GM12878 (cell line): ENCODE measurements at regions of chr9 and their contacts with region 1.

Region 1: GRCh38 chr9:76810377-76810957 is 46.2 kb downstream of the PCA3 start:
- DNase-seq: no peak
- ATAC-seq: peak; percentile 85
- H3K4me3 ChIP-seq: no peak overlapping the region
- H3K27ac ChIP-seq: no peak overlapping the region
- H3K4me1 ChIP-seq: no peaks in the 10 kb centered on the region
- H3K27me3 ChIP-seq: no peaks in the 10 kb centered on the region; a peak in 1 of 4 replicates
- CTCF ChIP-seq: peak; percentile 78 to 92 (median 88)
- EP300 ChIP-seq: no peak
- POLR2A ChIP-seq: no peak
- RAD21 ChIP-seq: peak; percentile 95

Region 2: DNA sequence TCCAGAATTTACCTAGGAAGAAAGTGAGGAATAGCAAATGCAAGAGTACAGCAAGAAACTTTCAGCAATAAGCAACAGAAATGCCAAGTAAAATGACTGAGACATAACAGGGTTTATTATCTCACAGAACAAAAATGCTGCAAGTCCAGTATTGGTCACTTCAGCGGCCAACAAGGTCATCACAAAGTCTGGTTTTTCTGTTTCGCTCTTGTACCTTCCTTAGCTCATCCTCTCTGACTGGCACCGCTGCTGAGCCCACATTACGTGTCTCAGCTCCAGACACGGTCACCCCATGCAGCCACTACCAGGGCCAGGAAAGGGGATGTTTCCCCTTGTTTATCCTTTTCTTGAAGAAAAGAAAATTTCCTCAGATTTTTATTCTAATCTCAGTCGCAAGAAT is 498.9 kb before region 1 on chr9:
- CTCF ChIA-PET with region 1: no interaction called
- POLR2A ChIA-PET with region 1: no interaction called
- RAD21 ChIA-PET with region 1: no interaction called
- SMC1A ChIA-PET with region 1: no interaction called
- in situ Hi-C with region 1: no loop called
- intact Hi-C with region 1: no loop called
- DNase-seq: no peak
- ATAC-seq: no peak
- H3K4me3 ChIP-seq: no peak overlapping the region
- H3K27ac ChIP-seq: no peak overlapping the region
- H3K4me1 ChIP-seq: no peaks in the 10 kb centered on the region
- H3K27me3 ChIP-seq: peaks cover 0 to 2% of the 10 kb centered on the region in 2 experiments; a peak in 2 of 4 replicates
- CTCF ChIP-seq: no peak
- EP300 ChIP-seq: no peak
- POLR2A ChIP-seq: no peak
- RAD21 ChIP-seq: no peak

Region 3: DNA sequence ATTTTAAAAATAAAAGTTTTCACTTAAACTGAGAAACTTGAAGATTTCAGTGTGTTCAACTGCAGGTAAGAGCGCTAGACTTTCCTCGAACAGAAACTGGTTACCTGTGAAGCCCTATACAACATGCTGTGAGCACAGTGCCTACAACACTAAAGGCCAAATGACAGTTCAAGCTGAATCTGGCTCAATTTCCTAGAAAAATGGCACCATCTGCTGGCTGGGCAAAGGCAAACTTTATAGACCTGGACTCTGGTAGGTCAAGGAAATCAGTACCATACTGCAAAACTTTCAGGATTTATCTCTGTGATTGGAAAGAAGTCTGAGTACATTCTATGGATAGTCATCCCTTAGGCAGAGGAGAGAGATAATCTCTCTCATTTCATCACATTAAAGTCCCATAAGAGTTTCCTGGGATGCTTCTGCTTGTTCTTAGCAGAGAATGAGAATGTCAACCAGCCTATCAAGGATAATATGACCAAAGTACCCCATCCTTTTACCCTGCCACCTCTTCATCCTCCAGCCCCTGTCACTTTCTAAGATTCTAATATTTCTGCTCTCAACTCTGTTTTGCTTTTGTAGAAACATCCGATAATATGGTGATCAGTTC is 177.2 kb after region 1 on chr9:
- CTCF ChIA-PET with region 1: interaction called, 11 read pairs
- POLR2A ChIA-PET with region 1: no interaction called
- RAD21 ChIA-PET with region 1: interaction called, 9 read pairs
- SMC1A ChIA-PET with region 1: interaction called, 10 read pairs
- in situ Hi-C with region 1: loop called (anchors 10 kb)
- intact Hi-C with region 1: loop called (anchors 1 kb)
- DNase-seq: peak; percentile 5
- ATAC-seq: peak; percentile 87
- H3K4me3 ChIP-seq: no peak overlapping the region
- H3K27ac ChIP-seq: no peak overlapping the region
- H3K4me1 ChIP-seq: no peaks in the 10 kb centered on the region
- H3K27me3 ChIP-seq: no peaks in the 10 kb centered on the region; a peak in 1 of 4 replicates
- CTCF ChIP-seq: peak; percentile 43 to 67 (median 50); a peak in 5 of 6 replicates
- EP300 ChIP-seq: no peak
- POLR2A ChIP-seq: no peak
- RAD21 ChIP-seq: peak; percentile 81

Region 4: GRCh38 chr9:76996700-76997099 is 186.2 kb after region 1 on chr9:
- CTCF ChIA-PET with region 1: interaction called, 56 read pairs
- POLR2A ChIA-PET with region 1: no interaction called
- RAD21 ChIA-PET with region 1: interaction called, 17 read pairs
- SMC1A ChIA-PET with region 1: no interaction called
- in situ Hi-C with region 1: no loop called
- intact Hi-C with region 1: no loop called
- DNase-seq: no peak
- ATAC-seq: peak; percentile 82
- H3K4me3 ChIP-seq: no peak overlapping the region
- H3K27ac ChIP-seq: no peak overlapping the region
- H3K4me1 ChIP-seq: no peaks in the 10 kb centered on the region
- H3K27me3 ChIP-seq: no peaks in the 10 kb centered on the region; a peak in 1 of 4 replicates
- CTCF ChIP-seq: peak; percentile 42 to 54 (median 48); a peak in 4 of 6 replicates
- EP300 ChIP-seq: no peak
- POLR2A ChIP-seq: no peak
- RAD21 ChIP-seq: peak; percentile 43

Region 5: DNA sequence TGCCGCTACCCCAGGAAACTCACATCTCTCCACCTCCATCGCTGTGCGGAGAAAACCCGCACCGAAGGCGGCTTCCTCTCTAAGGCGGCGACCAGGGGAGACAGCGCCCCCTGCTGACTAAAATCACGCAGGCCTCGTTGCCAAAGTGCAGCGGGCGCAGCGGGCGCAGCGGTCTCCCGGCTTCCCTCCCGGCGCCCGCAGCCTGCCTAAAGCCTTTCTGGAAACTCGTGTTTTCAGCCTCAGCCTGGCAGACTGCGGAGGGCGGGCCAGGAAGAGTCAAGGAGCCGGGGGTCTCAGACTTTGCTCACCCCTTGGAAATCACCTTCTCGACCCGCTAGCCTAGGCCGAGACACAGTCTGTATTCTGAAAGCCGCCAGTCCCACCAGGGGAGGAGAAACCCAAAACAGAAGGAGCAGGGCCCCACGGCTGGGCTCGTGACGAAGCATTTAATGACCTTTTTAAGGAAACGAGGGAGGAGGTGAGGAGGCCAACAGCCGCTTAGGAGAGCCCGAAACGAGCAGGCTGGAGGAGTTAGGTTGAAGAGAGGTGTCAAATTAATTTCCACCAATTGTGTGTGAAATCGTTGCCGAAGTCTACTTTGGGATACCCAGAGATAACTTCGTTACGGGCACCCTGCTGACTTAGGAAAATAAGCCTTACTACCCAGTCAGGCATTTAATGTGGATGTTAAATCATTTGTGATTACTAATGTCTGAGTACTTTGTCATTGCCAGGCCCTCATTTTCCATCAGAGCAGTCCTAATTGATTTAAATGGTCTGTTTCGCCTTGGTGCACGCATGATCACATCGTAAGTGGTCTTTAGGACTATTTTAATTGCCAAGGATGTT is 201.7 kb after region 1 on chr9:
- CTCF ChIA-PET with region 1: interaction called, 3 read pairs
- POLR2A ChIA-PET with region 1: no interaction called
- RAD21 ChIA-PET with region 1: interaction called, 8 read pairs
- SMC1A ChIA-PET with region 1: no interaction called
- in situ Hi-C with region 1: no loop called
- intact Hi-C with region 1: loop called (anchors 1 kb)
- DNase-seq: no peak
- ATAC-seq: peak; percentile 89
- H3K4me3 ChIP-seq: no peak overlapping the region
- H3K27ac ChIP-seq: no peak overlapping the region
- H3K4me1 ChIP-seq: no peaks in the 10 kb centered on the region
- H3K27me3 ChIP-seq: peaks cover 7 to 16% of the 10 kb centered on the region in 2 experiments
- CTCF ChIP-seq: peak; percentile 68 to 82 (median 81)
- EP300 ChIP-seq: no peak
- POLR2A ChIP-seq: no peak
- RAD21 ChIP-seq: peak; percentile 62

Region 6: GRCh38 chr9:77149879-77150278 is 339.4 kb after region 1 on chr9:
- CTCF ChIA-PET with region 1: interaction called, 19 read pairs
- POLR2A ChIA-PET with region 1: no interaction called
- RAD21 ChIA-PET with region 1: interaction called, 7 read pairs
- SMC1A ChIA-PET with region 1: interaction called, 4 read pairs
- in situ Hi-C with region 1: loop called (anchors 25 kb)
- intact Hi-C with region 1: loop called (anchors 1 kb)
- DNase-seq: no peak
- ATAC-seq: no peak
- H3K4me3 ChIP-seq: no peak overlapping the region
- H3K27ac ChIP-seq: no peak overlapping the region
- H3K4me1 ChIP-seq: no peaks in the 10 kb centered on the region
- H3K27me3 ChIP-seq: no peaks in the 10 kb centered on the region; a peak in 1 of 4 replicates
- CTCF ChIP-seq: no peak
- EP300 ChIP-seq: no peak
- POLR2A ChIP-seq: no peak
- RAD21 ChIP-seq: no peak